PC-9 (cell line): ENCODE measurements at regions of chr21 and their contacts with region 1.

Region 1: GRCh38 chr21:36606287-36606982 is 92.5 kb upstream of the SIM2 start:
- DNase-seq: no peak
- H3K4me3 ChIP-seq: no peak overlapping the region
- H3K27ac ChIP-seq: no peak overlapping the region
- H3K4me1 ChIP-seq: no peaks in the 10 kb centered on the region
- H3K27me3 ChIP-seq: no peaks in the 10 kb centered on the region
- CTCF ChIP-seq: no peak

Region 2: GRCh38 chr21:36551731-36552433 is 54.6 kb before region 1 on chr21:
- CTCF ChIA-PET with region 1: no interaction called
- POLR2A ChIA-PET with region 1: no interaction called
- intact Hi-C with region 1: no loop called
- DNase-seq: no peak
- H3K4me3 ChIP-seq: no peak overlapping the region
- H3K27ac ChIP-seq: no peak overlapping the region
- H3K4me1 ChIP-seq: no peaks in the 10 kb centered on the region
- H3K27me3 ChIP-seq: no peaks in the 10 kb centered on the region
- CTCF ChIP-seq: no peak

Region 3: DNA sequence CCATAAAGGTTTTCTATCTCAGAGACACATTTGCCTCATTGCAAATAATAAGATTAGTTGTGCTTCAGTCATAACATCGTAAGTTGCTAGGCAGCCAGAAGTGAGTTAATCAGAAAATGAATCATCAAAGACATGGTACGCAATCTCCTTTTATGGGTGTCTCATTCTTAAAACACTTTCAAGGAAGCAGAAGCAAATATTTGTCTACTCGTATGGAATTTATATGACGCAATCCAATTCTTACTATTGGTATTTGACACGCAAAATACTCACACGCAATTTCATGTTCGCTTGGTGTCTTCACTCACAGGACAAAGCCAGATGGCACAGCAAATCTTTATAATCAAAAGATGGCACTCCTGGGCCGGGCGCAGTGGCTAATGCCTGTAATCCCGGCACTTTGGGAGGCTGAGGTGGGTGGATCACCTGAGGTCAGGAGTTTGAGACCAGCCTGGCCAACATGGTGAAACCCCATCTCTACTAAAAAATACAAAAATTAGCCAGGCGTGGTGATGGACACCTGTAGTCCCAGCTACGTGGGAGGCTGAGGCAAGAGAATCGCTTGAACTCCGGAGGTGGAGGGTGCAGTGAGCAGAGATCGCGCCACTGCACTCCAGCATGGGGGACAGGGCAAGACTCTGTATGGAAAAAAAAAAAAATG is 303.6 kb after region 1 on chr21:
- CTCF ChIA-PET with region 1: interaction called, 12 read pairs
- POLR2A ChIA-PET with region 1: no interaction called
- intact Hi-C with region 1: no loop called
- DNase-seq: peak; percentile 40 to 97
- H3K4me3 ChIP-seq: no peak overlapping the region
- H3K27ac ChIP-seq: peak overlapping the region; percentile 86
- H3K4me1 ChIP-seq: peaks cover 16% of the 10 kb centered on the region
- H3K27me3 ChIP-seq: no peaks in the 10 kb centered on the region
- CTCF ChIP-seq: no peak